ENCODE measurements at regions of chr2 and their contacts with region 1.

Region 1: GRCh38 chr2:189096769-189097447 is 82.7 kb downstream of the COL5A2 start:
- DNase-seq: no peak
- ATAC-seq: no peak
- H3K4me3 ChIP-seq: no peak overlapping the region
- H3K27ac ChIP-seq: no peak overlapping the region
- H3K4me1 ChIP-seq: peaks cover 1% of the 10 kb centered on the region
- H3K27me3 ChIP-seq: no peaks in the 10 kb centered on the region

Region 2: GRCh38 chr2:189287982-189288521 is 191.1 kb after region 1 on chr2:
- intact Hi-C with region 1: loop called in 1 of 4 experiments (anchors 10 kb)
- DNase-seq: no peak
- ATAC-seq: peak; percentile 59 to 70
- H3K4me3 ChIP-seq: no peak overlapping the region
- H3K27ac ChIP-seq: no peak overlapping the region
- H3K4me1 ChIP-seq: no peaks in the 10 kb centered on the region
- H3K27me3 ChIP-seq: no peaks in the 10 kb centered on the region

Region 3: GRCh38 chr2:189347540-189347939 is 250.6 kb after region 1 on chr2:
- intact Hi-C with region 1: loop called in 1 of 4 experiments (anchors 10 kb)
- DNase-seq: no peak
- ATAC-seq: peak; percentile 86 to 88
- H3K4me3 ChIP-seq: no peak overlapping the region
- H3K27ac ChIP-seq: no peak overlapping the region
- H3K4me1 ChIP-seq: no peaks in the 10 kb centered on the region
- H3K27me3 ChIP-seq: no peaks in the 10 kb centered on the region

Region 4: GRCh38 chr2:189412330-189412953 is 315.5 kb after region 1 on chr2:
- intact Hi-C with region 1: loop called in 1 of 4 experiments (anchors 10 kb)
- DNase-seq: no peak
- ATAC-seq: peak; percentile 59 to 67
- H3K4me3 ChIP-seq: no peak overlapping the region
- H3K27ac ChIP-seq: no peak overlapping the region
- H3K4me1 ChIP-seq: no peaks in the 10 kb centered on the region
- H3K27me3 ChIP-seq: no peaks in the 10 kb centered on the region

Measured in right cardiac atrium (tissue), 5 donors.